CD8-positive, alpha-beta T cell (primary cell): ENCODE measurements at regions of chr4 and their contacts with region 1.

Region 1: GRCh38 chr4:88533937-88534750 is 10.6 kb upstream of the PYURF start:
- DNase-seq: no peak
- ATAC-seq: no peak
- H3K4me3 ChIP-seq: no peak overlapping the region
- H3K4me3 Mint-ChIP-seq: no peak overlapping the region
- H3K27ac ChIP-seq: no peak overlapping the region
- H3K27ac Mint-ChIP-seq: no peak overlapping the region
- H3K4me1 ChIP-seq: no peaks in the 10 kb centered on the region
- H3K4me1 Mint-ChIP-seq: no peaks in the 10 kb centered on the region
- H3K27me3 ChIP-seq: no peaks in the 10 kb centered on the region
- H3K27me3 Mint-ChIP-seq: no peaks in the 10 kb centered on the region
- CTCF ChIP-seq: no peak

Region 2: GRCh38 chr4:88583631-88584475 is 49.7 kb after region 1 on chr4:
- CTCF ChIA-PET with region 1: interaction called, 12 read pairs
- POLR2A ChIA-PET with region 1: no interaction called
- intact Hi-C with region 1: no loop called
- DNase-seq: no peak
- ATAC-seq: no peak
- H3K4me3 ChIP-seq: no peak overlapping the region
- H3K4me3 Mint-ChIP-seq: no peak overlapping the region
- H3K27ac ChIP-seq: no peak overlapping the region
- H3K27ac Mint-ChIP-seq: no peak overlapping the region
- H3K4me1 ChIP-seq: no peaks in the 10 kb centered on the region
- H3K4me1 Mint-ChIP-seq: no peaks in the 10 kb centered on the region
- H3K27me3 ChIP-seq: no peaks in the 10 kb centered on the region
- H3K27me3 Mint-ChIP-seq: no peaks in the 10 kb centered on the region
- CTCF ChIP-seq: no peak

Region 3: GRCh38 chr4:88646528-88647280 is 112.6 kb after region 1 on chr4:
- CTCF ChIA-PET with region 1: interaction called, 28 read pairs
- POLR2A ChIA-PET with region 1: no interaction called
- intact Hi-C with region 1: no loop called
- DNase-seq: no peak
- ATAC-seq: no peak
- H3K4me3 ChIP-seq: no peak overlapping the region
- H3K4me3 Mint-ChIP-seq: no peak overlapping the region
- H3K27ac ChIP-seq: no peak overlapping the region
- H3K27ac Mint-ChIP-seq: peak overlapping the region; percentile 1
- H3K4me1 ChIP-seq: peaks cover 18% of the 10 kb centered on the region
- H3K4me1 Mint-ChIP-seq: peaks cover 64% of the 10 kb centered on the region
- H3K27me3 ChIP-seq: no peaks in the 10 kb centered on the region
- H3K27me3 Mint-ChIP-seq: no peaks in the 10 kb centered on the region
- CTCF ChIP-seq: no peak

Region 4: GRCh38 chr4:88659055-88659889 is 125.1 kb after region 1 on chr4:
- CTCF ChIA-PET with region 1: interaction called, 112 read pairs
- POLR2A ChIA-PET with region 1: interaction called, 4 read pairs
- intact Hi-C with region 1: loop called (anchors 1 kb)
- DNase-seq: peak in 5 of 9 experiments; percentile 30 to 62 (median 40)
- ATAC-seq: peak; percentile 78
- H3K4me3 ChIP-seq: no peak overlapping the region
- H3K4me3 Mint-ChIP-seq: no peak overlapping the region
- H3K27ac ChIP-seq: no peak overlapping the region
- H3K27ac Mint-ChIP-seq: peak overlapping the region; percentile 10
- H3K4me1 ChIP-seq: no peaks in the 10 kb centered on the region
- H3K4me1 Mint-ChIP-seq: peaks cover 2% of the 10 kb centered on the region
- H3K27me3 ChIP-seq: no peaks in the 10 kb centered on the region
- H3K27me3 Mint-ChIP-seq: no peaks in the 10 kb centered on the region
- CTCF ChIP-seq: peak; percentile 72

Region 5: GRCh38 chr4:88713782-88714181 is 179.6 kb after region 1 on chr4:
- CTCF ChIA-PET with region 1: no interaction called
- POLR2A ChIA-PET with region 1: no interaction called
- intact Hi-C with region 1: no loop called
- DNase-seq: no peak
- ATAC-seq: no peak
- H3K4me3 ChIP-seq: no peak overlapping the region
- H3K4me3 Mint-ChIP-seq: no peak overlapping the region
- H3K27ac ChIP-seq: no peak overlapping the region
- H3K27ac Mint-ChIP-seq: no peak overlapping the region
- H3K4me1 ChIP-seq: no peaks in the 10 kb centered on the region
- H3K4me1 Mint-ChIP-seq: peaks cover 4% of the 10 kb centered on the region
- H3K27me3 ChIP-seq: no peaks in the 10 kb centered on the region
- H3K27me3 Mint-ChIP-seq: no peaks in the 10 kb centered on the region
- CTCF ChIP-seq: no peak

Region 6: DNA sequence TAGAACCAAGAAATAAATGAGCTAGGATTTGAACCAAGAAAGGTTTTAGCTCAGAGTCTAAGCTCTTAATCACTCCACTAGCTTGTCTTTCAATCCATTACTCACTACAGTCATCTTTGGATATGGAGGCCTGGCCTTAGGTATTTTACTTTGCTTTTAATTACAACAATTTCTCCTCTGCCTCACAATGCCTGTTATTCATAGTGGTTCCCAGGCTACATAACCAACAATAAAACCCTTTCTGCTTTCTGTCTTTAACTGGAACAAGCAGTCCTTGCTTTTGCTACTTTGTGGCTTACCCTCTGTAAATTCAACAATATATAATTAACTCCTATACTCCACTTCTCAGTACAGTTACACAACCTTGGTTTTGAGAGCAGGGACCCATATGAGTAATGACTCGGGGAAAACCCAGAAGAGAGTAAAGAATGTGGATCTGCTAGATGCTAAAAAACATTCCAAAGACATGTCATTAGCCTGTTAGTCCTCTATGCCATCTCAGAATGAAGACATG is 258.2 kb after region 1 on chr4:
- CTCF ChIA-PET with region 1: interaction called, 15 read pairs
- POLR2A ChIA-PET with region 1: no interaction called
- intact Hi-C with region 1: loop called in 1 of 2 experiments (anchors 1 kb)
- DNase-seq: no peak
- ATAC-seq: no peak
- H3K4me3 ChIP-seq: no peak overlapping the region
- H3K4me3 Mint-ChIP-seq: no peak overlapping the region
- H3K27ac ChIP-seq: no peak overlapping the region
- H3K27ac Mint-ChIP-seq: no peak overlapping the region
- H3K4me1 ChIP-seq: no peaks in the 10 kb centered on the region
- H3K4me1 Mint-ChIP-seq: no peaks in the 10 kb centered on the region
- H3K27me3 ChIP-seq: no peaks in the 10 kb centered on the region
- H3K27me3 Mint-ChIP-seq: no peaks in the 10 kb centered on the region
- CTCF ChIP-seq: no peak